Endothelial cell of umbilical vein (primary cell): ENCODE measurements at regions of chr13 and their contacts with region 1.

Region 1: GRCh38 chr13:44758630-44759383 is 182.7 kb upstream of the TSC22D1 start:
- DNase-seq: peak; percentile 85
- H3K4me3 ChIP-seq: no peak overlapping the region
- H3K27ac ChIP-seq: peak overlapping the region; percentile 85
- H3K4me1 ChIP-seq: peaks cover 53% of the 10 kb centered on the region
- H3K27me3 ChIP-seq: no peaks in the 10 kb centered on the region
- CTCF ChIP-seq: no peak
- POLR2A ChIP-seq: no peak

Region 2: GRCh38 chr13:44364348-44365049 is 394.3 kb before region 1 on chr13:
- CTCF ChIA-PET with region 1: no interaction called
- POLR2A ChIA-PET with region 1: no interaction called
- dilution Hi-C with region 1: no loop called
- intact Hi-C with region 1: loop called (anchors 5 kb)
- DNase-seq: peak; percentile 90
- H3K4me3 ChIP-seq: no peak overlapping the region
- H3K27ac ChIP-seq: peak overlapping the region; percentile 89
- H3K4me1 ChIP-seq: peaks cover 51% of the 10 kb centered on the region
- H3K27me3 ChIP-seq: no peaks in the 10 kb centered on the region
- CTCF ChIP-seq: no peak
- POLR2A ChIP-seq: peak; percentile 25

Region 3: GRCh38 chr13:44710576-44710975 is 48.2 kb before region 1 on chr13:
- CTCF ChIA-PET with region 1: interaction called, 4 read pairs
- POLR2A ChIA-PET with region 1: no interaction called
- dilution Hi-C with region 1: no loop called
- intact Hi-C with region 1: loop called (anchors 1 kb)
- DNase-seq: peak; percentile 92
- H3K4me3 ChIP-seq: peak overlapping the region in 1 of 3 experiments; percentile 29
- H3K27ac ChIP-seq: peak overlapping the region; percentile 91
- H3K4me1 ChIP-seq: peaks cover 38% of the 10 kb centered on the region
- H3K27me3 ChIP-seq: no peaks in the 10 kb centered on the region
- CTCF ChIP-seq: no peak
- POLR2A ChIP-seq: no peak

Region 4: GRCh38 chr13:44815623-44816022 is 56.8 kb after region 1 on chr13:
- CTCF ChIA-PET with region 1: interaction called, 3 read pairs
- POLR2A ChIA-PET with region 1: no interaction called
- dilution Hi-C with region 1: no loop called
- intact Hi-C with region 1: loop called (anchors 2 kb)
- DNase-seq: peak; percentile 54
- H3K4me3 ChIP-seq: no peak overlapping the region
- H3K27ac ChIP-seq: no peak overlapping the region
- H3K4me1 ChIP-seq: peaks cover 29% of the 10 kb centered on the region
- H3K27me3 ChIP-seq: no peaks in the 10 kb centered on the region
- CTCF ChIP-seq: no peak
- POLR2A ChIP-seq: no peak

Region 5: DNA sequence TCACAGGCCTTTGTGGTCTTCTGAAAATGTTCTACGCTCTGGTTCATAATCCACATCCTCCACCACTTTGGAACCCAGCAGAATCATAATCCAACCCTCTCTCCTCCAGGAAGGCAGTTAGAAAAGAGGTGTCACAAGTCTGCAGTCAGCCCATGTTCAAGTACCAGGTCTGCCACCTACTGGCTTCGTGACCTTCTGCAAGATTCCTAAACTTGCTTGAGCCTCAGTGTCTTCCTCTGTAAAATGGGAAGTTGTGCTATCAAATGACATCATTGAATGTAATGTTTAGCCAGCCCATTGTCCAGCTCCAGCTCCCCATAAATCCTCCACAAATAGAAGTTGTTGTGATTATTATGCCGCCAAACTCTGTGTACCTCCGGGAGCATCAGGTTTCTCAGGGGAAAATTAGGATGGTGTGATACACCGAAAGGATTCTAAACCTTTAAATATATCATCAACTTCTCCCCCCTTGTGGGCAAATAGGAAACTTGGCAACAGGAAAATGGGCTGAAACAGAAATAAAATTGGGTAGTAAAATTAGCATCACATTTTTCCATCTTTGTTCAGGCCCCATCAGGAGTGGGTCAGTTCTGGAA is 120.8 kb after region 1 on chr13:
- CTCF ChIA-PET with region 1: no interaction called
- POLR2A ChIA-PET with region 1: no interaction called
- dilution Hi-C with region 1: no loop called
- intact Hi-C with region 1: loop called (anchors 2 kb)
- DNase-seq: peak; percentile 48
- H3K4me3 ChIP-seq: no peak overlapping the region
- H3K27ac ChIP-seq: no peak overlapping the region
- H3K4me1 ChIP-seq: peaks cover 12% of the 10 kb centered on the region
- H3K27me3 ChIP-seq: no peaks in the 10 kb centered on the region
- CTCF ChIP-seq: peak; percentile 47 to 52
- POLR2A ChIP-seq: no peak

Region 6: DNA sequence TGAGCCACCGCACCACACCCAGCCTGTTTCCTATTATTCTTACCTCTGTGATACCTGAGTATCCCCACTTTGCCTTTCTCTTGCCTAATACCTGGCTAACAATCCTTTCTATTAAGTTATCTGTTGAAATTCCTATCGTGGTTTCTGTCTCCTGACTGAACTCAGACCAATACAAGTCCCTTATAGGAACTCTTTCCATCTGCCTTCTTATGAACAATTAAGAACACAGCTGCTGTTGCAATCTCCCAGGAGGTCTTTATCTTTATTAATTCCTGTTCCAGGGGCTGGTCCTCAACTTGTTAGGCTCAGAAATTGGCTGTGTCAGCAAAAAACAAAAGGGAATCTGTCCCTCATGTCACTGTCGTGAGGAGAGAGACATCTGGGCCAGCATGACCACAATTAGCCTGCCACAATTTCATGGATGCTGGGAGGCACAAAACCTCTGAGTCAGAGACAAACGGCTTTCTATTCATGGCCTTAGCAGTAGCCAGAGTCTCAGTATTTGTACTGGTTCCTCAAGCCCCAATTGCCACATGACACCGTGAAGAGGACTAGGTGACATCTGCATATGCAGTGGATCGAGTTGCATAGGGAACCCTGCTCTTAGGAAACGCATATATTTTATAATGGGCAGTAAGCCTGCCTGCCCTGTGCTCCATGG is 172.3 kb after region 1 on chr13:
- CTCF ChIA-PET with region 1: no interaction called
- POLR2A ChIA-PET with region 1: no interaction called
- dilution Hi-C with region 1: no loop called
- intact Hi-C with region 1: loop called (anchors 5 kb)
- DNase-seq: no peak
- H3K4me3 ChIP-seq: no peak overlapping the region
- H3K27ac ChIP-seq: peak overlapping the region; percentile 94
- H3K4me1 ChIP-seq: peaks cover 63% of the 10 kb centered on the region
- H3K27me3 ChIP-seq: no peaks in the 10 kb centered on the region
- CTCF ChIP-seq: no peak
- POLR2A ChIP-seq: no peak